Activated CD4-positive, alpha-beta memory T cell treated with anti-CD3 and anti-CD28 coated beads for 36 hours (primary cell): ENCODE measurements at regions of chr1 and their contacts with region 1.

Region 1: GRCh38 chr1:239814303-239814881 is 277.3 kb upstream of the FMN2 start:
- DNase-seq: peak; percentile 76
- H3K4me3 Mint-ChIP-seq: peak overlapping the region; percentile 17
- H3K27ac Mint-ChIP-seq: peak overlapping the region; percentile 39
- H3K4me1 Mint-ChIP-seq: peaks cover 42% of the 10 kb centered on the region
- H3K27me3 Mint-ChIP-seq: no peaks in the 10 kb centered on the region

Region 2: DNA sequence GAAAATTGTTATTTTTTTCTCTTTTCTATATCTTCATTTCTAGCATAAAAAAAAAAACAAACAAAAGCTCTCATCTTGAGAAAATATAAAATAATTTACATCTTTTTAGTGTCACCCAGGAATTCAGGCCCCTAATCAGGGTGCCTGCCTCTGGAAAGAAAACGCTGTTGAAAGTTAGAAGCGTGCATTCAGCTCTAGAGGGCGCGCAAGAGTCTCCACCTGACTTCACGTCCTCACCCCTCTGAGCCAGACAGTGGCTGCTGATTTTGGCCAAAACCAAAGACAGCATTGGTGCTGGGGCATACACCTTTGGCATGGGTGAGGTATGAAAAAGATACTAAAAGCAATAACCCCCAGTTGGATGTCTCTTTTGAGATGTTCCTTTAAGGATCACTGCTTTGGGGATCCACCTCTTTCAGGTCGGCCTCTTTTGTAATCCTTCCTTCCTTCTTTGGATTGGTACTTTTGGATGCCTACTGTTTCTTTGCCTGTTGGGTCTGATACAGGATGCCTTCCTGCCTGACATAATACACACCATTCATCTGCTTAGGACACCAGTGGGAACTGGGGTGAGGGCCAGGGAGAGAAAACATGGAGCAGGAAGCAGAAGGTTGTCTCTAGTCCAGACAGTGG is 505.6 kb before region 1 on chr1:
- CTCF ChIA-PET with region 1: interaction called, 3 read pairs
- POLR2A ChIA-PET with region 1: no interaction called
- intact Hi-C with region 1: loop called (anchors 1 kb)
- DNase-seq: peak; percentile 34
- H3K4me3 Mint-ChIP-seq: no peak overlapping the region
- H3K27ac Mint-ChIP-seq: no peak overlapping the region
- H3K4me1 Mint-ChIP-seq: no peaks in the 10 kb centered on the region
- H3K27me3 Mint-ChIP-seq: peaks cover 2% of the 10 kb centered on the region

Region 3: DNA sequence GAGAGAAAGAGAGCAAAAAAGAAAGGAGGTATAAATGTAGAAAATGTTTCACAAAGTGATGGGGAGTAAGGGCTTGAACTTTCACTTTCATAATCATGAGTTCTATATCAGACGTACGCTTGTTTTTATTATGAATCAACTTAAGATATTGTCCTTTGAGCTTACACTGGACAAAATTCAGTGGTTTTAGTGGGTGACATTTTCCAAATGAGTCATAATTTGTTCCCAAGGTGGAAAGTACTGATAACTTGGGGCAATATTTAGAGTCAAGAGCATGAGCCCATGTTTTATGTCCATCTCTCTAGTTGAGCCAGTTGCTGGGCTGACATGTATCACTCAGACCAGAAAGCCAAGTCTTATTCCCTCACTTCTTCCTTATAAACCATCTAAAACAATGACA is 266.4 kb before region 1 on chr1:
- CTCF ChIA-PET with region 1: no interaction called
- POLR2A ChIA-PET with region 1: no interaction called
- intact Hi-C with region 1: loop called (anchors 1 kb)
- DNase-seq: no peak
- H3K4me3 Mint-ChIP-seq: no peak overlapping the region
- H3K27ac Mint-ChIP-seq: peak overlapping the region; percentile 54
- H3K4me1 Mint-ChIP-seq: peaks cover 15% of the 10 kb centered on the region
- H3K27me3 Mint-ChIP-seq: no peaks in the 10 kb centered on the region

Region 4: GRCh38 chr1:239558991-239559390 is 255.4 kb before region 1 on chr1:
- CTCF ChIA-PET with region 1: no interaction called
- POLR2A ChIA-PET with region 1: no interaction called
- intact Hi-C with region 1: no loop called
- DNase-seq: no peak
- H3K4me3 Mint-ChIP-seq: no peak overlapping the region
- H3K27ac Mint-ChIP-seq: no peak overlapping the region
- H3K4me1 Mint-ChIP-seq: peaks cover 8% of the 10 kb centered on the region
- H3K27me3 Mint-ChIP-seq: no peaks in the 10 kb centered on the region